ENCODE measurements at regions of chr5 and their contacts with region 1.

Region 1: GRCh38 chr5:154940772-154941620 is at the start of gene MRPL22:
- DNase-seq: peak; percentile 93 to 97 (median 94)
- H3K4me3 ChIP-seq: peak within 1 kb of the TSS; percentile 67 to 81
- H3K4me3 Mint-ChIP-seq: peak within 1 kb of the TSS; percentile 97 to 100 (median 98)
- H3K27ac ChIP-seq: peak within 1 kb of the TSS; percentile 69
- H3K27ac Mint-ChIP-seq: peak within 1 kb of the TSS; percentile 97 to 100 (median 98)
- H3K4me1 ChIP-seq: peaks cover 38% of the 10 kb centered on the region
- H3K4me1 Mint-ChIP-seq: peaks cover 29 to 60% (median 44%) of the 10 kb centered on the region in 4 donors
- H3K27me3 ChIP-seq: no peaks in the 10 kb centered on the region
- H3K27me3 Mint-ChIP-seq: no peaks in the 10 kb centered on the region
- total RNA-seq, gene MRPL22: 28.0 to 33.1 TPM

Region 2: GRCh38 chr5:154445422-154446182 is 495.4 kb before region 1 on chr5 and contains the start of gene SAP30L:
- CTCF ChIA-PET with region 1: no interaction called
- POLR2A ChIA-PET with region 1: no interaction called
- intact Hi-C with region 1: loop called (anchors 5 kb)
- DNase-seq: peak; percentile 93 to 99 (median 96)
- H3K4me3 ChIP-seq: peak within 1 kb of the TSS; percentile 95 to 99
- H3K4me3 Mint-ChIP-seq: peak within 1 kb of the TSS; percentile 97 to 100 (median 99)
- H3K27ac ChIP-seq: peak within 1 kb of the TSS; percentile 66
- H3K27ac Mint-ChIP-seq: peak within 1 kb of the TSS; percentile 83 to 100 (median 96)
- H3K4me1 ChIP-seq: peaks cover 46% of the 10 kb centered on the region
- H3K4me1 Mint-ChIP-seq: peaks cover 40 to 75% (median 52%) of the 10 kb centered on the region in 4 donors
- H3K27me3 ChIP-seq: no peaks in the 10 kb centered on the region
- H3K27me3 Mint-ChIP-seq: no peaks in the 10 kb centered on the region
- total RNA-seq, gene SAP30L: 36.9 to 47.5 TPM

Measured in CD4-positive, alpha-beta memory T cell (primary cell).